ENCODE measurements at regions of chr19 and their contacts with region 1.

Region 1: GRCh38 chr19:18683213-18683939 is at the start of gene CRTC1:
- DNase-seq: peak in 1 of 2 donors; percentile 92
- H3K4me3 ChIP-seq: peak within 1 kb of the TSS; percentile 68 to 73
- H3K27ac ChIP-seq: peak within 1 kb of the TSS; percentile 62 to 74
- H3K4me1 ChIP-seq: peaks cover 8 to 18% of the 10 kb centered on the region in 2 donors
- H3K27me3 ChIP-seq: no peaks in the 10 kb centered on the region
- CTCF ChIP-seq: peak in 1 of 3 experiments; percentile 2
- total RNA-seq, gene CRTC1: 10.0 TPM

Region 2: DNA sequence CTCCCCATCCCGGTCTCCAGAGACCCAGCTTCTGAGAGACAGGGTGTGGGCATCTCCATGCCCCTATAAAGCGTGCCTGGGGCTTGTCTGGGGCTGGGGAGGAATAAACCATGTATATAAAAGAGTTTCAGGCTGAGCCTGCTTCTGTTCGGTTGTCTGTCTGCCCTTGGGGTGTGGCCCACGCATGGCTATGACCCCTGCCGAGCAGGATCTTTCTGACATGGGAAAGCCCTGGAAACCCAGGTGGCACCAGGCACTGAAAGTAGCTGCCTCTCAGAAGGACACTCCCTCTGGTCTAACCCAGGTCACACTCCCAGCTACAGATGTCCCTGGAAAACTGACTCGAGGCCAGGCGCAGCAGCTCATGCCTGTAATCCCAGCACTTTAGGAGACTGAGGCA is 62.5 kb before region 1 on chr19:
- intact Hi-C with region 1: no loop called
- DNase-seq: no peak
- H3K4me3 ChIP-seq: no peak overlapping the region
- H3K27ac ChIP-seq: no peak overlapping the region
- H3K4me1 ChIP-seq: no peaks in the 10 kb centered on the region
- H3K27me3 ChIP-seq: no peaks in the 10 kb centered on the region
- CTCF ChIP-seq: no peak

Region 3: DNA sequence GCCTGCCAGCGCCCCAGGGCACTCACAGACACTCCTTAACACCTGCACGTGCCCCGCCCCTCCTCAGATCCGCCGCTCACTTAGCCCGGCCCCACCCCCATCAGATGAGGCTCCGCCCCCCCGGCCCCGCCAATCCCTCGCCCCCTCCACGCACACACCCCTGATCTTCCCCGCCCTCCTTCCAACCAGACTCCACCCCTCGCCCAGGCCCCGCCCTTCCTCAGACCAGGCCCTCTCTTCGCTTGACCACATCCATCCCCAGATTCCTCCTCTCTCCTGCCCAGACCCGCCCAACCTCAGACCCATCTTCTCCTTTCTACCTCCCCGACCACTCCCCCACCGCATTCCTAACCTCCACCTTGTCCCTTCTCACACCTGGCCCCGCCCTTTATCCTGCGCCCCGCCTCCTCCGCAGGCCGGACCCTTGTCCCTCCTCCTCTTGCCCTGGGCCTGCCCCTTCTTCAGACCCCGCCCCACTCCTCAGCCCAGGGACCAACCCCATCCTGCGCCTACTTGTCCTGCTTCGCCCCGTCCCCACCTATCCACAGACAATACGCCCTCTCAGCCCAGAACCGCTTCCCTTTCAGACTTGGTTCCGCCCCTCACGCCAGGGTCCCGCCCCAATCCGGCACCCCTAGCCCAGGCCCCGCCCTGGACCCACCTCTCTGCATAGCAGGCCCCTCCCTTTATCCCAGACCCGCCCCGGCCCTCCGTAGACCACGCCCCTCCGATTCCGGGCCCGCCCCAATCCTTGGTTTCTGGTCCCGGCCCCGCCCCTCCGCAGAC is 47.0 kb before region 1 on chr19:
- intact Hi-C with region 1: loop called (anchors 1 kb)
- DNase-seq: peak; percentile 89 to 99
- H3K4me3 ChIP-seq: peak overlapping the region; percentile 85 to 95
- H3K27ac ChIP-seq: peak overlapping the region; percentile 88 to 94
- H3K4me1 ChIP-seq: peaks cover 7 to 9% of the 10 kb centered on the region in 2 donors
- H3K27me3 ChIP-seq: no peaks in the 10 kb centered on the region
- CTCF ChIP-seq: no peak

Region 4: DNA sequence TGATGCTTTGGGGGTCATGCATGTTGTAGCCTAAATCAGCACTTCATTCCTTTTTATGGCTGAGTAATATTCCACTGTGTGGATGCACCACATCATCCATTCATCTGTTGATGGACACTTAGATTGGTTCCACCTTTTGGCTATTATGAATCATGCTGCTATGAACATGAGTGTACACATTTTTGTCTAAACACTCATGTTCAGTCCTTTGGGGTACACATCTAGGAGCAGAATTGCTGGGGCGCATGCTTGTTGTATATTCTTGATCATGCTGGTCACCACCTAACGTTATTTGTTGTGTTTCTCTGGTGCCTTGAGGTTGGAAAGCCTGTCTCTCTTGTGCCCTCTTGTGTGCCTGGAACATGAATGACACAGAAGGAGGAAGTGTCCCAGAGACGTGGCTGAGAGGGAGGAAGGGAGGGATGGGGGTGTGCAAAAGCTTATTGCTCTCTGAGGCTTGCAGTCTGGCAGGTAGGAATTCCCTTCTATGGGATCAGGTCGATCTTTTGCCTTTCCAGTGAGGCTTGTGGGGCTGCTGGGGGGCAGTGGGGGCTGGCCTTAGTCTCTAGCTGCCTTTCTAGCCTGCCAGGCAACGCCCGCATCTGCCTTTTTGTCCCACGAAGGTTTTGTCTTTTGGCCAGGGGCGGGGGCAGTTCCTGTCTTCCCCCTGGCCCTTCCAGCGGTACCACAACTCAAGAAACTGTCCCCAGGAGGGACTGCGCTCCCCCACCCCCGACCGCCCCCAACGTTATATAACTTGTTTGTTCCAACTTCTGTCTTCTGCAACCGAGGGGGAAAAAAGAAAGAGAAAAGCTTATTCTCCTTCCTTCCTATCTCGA is 39.0 kb before region 1 on chr19:
- intact Hi-C with region 1: loop called (anchors 2 kb)
- DNase-seq: no peak
- H3K4me3 ChIP-seq: peak overlapping the region; percentile 37 to 50
- H3K27ac ChIP-seq: peak overlapping the region; percentile 82 to 86
- H3K4me1 ChIP-seq: peaks cover 11 to 35% of the 10 kb centered on the region in 2 donors
- H3K27me3 ChIP-seq: no peaks in the 10 kb centered on the region
- CTCF ChIP-seq: peak in 2 of 3 experiments; percentile 26 to 39

Region 5: DNA sequence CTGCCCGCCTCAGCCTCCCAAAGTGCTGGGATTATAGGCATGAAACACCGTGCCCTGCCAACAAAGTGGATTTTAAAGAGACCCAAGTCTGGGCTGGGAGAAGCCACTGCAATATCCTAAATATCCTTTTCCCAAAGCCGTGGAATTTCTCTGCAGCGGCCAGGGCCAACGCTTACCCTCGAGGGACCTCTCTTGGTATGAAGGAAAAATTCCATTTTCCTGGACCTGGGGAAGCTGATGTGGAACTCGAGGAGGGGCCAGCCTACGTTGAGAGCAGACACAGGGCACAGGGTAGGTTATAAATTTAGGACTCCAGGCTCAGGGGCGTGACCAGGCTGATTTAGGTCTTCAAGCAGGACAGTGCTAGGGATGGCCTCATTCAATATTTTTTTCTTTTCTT is 130.7 kb after region 1 on chr19:
- intact Hi-C with region 1: loop called (anchors 5 kb)
- DNase-seq: peak in 1 of 2 donors; percentile 80
- H3K4me3 ChIP-seq: no peak overlapping the region
- H3K27ac ChIP-seq: no peak overlapping the region
- H3K4me1 ChIP-seq: peaks cover 1 to 16% of the 10 kb centered on the region in 2 donors
- H3K27me3 ChIP-seq: no peaks in the 10 kb centered on the region
- CTCF ChIP-seq: peak in 2 of 3 experiments; percentile 10 to 35

Region 6: GRCh38 chr19:18846862-18847548 is 163.6 kb after region 1 on chr19:
- intact Hi-C with region 1: loop called (anchors 10 kb)
- DNase-seq: peak in 1 of 2 donors; percentile 86
- H3K4me3 ChIP-seq: no peak overlapping the region
- H3K27ac ChIP-seq: peak overlapping the region; percentile 81 to 90
- H3K4me1 ChIP-seq: peaks cover 23 to 47% of the 10 kb centered on the region in 2 donors
- H3K27me3 ChIP-seq: no peaks in the 10 kb centered on the region
- CTCF ChIP-seq: peak; percentile 77 to 86 (median 77)

Measured in ascending aorta (tissue), 2 donors.